GM12878 (cell line): ENCODE measurements at regions of chr2 and their contacts with region 1.

Region 1: DNA sequence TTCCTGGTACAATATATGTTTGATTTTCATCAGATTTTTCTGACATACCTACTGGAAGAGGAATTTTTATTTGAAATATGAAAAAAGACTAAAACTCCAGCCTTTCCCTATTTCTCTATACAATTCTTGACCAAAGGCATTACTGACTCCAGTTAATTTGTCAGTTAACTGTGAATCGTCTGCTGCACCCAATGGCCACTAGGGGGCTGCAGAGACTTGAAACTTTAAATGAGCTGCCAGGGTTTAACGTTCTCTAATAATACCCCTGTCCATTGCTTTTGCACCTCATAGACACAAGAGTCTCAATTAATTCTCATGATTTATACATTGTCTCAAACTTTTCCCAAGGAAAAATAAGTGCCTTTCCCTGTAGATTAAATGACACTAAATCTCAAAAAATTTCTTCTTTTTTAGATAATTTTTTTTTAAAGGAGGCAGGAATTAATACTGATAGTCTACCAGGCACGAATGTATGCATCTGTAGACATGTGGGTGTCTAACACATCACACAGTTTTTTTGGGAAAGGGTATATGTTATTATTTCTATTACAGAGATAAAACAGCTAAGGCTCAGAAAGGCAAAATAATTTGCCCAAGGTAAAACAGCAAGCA is 1.8 kb upstream of the ALK start:
- DNase-seq: no peak
- ATAC-seq: peak; percentile 83
- H3K4me3 ChIP-seq: no peak overlapping the region
- H3K27ac ChIP-seq: no peak overlapping the region
- H3K4me1 ChIP-seq: no peaks in the 10 kb centered on the region
- H3K27me3 ChIP-seq: peaks cover 6 to 13% of the 10 kb centered on the region in 2 experiments
- CTCF ChIP-seq: peak; percentile 84 to 90 (median 86)
- EP300 ChIP-seq: no peak
- POLR2A ChIP-seq: no peak
- RAD21 ChIP-seq: peak; percentile 80

Region 2: DNA sequence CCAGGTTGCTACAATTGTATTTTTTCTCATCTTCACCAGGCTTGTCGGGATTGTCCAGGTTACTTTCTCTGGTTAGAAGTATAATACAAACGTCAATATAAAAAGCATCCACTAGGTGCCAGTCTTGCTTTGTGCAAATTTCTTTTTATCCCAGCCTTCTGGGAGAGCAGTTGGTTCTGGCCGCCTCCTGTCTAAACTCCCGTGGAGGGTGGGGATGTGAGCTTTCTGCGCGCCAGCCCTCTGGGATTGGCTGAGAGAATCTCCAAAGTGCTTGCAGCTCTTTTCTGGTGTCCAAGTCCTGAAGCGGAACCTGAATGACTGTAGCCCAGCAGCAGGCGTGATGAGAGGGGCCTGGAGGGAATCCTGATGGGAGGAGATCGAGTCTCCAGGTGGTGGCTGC is 964.5 kb before region 1 on chr2:
- CTCF ChIA-PET with region 1: no interaction called
- POLR2A ChIA-PET with region 1: no interaction called
- RAD21 ChIA-PET with region 1: no interaction called
- SMC1A ChIA-PET with region 1: interaction called, 3 read pairs
- in situ Hi-C with region 1: no loop called
- intact Hi-C with region 1: loop called (anchors 5 kb)
- DNase-seq: peak; percentile 25
- ATAC-seq: peak; percentile 91
- H3K4me3 ChIP-seq: no peak overlapping the region
- H3K27ac ChIP-seq: no peak overlapping the region
- H3K4me1 ChIP-seq: no peaks in the 10 kb centered on the region
- H3K27me3 ChIP-seq: no peaks in the 10 kb centered on the region
- CTCF ChIP-seq: peak; percentile 47 to 74 (median 68); a peak in 5 of 6 replicates
- EP300 ChIP-seq: no peak
- POLR2A ChIP-seq: no peak
- RAD21 ChIP-seq: peak; percentile 95

Region 3: GRCh38 chr2:29766191-29766590 is 157.0 kb before region 1 on chr2:
- CTCF ChIA-PET with region 1: no interaction called
- POLR2A ChIA-PET with region 1: no interaction called
- RAD21 ChIA-PET with region 1: no interaction called
- SMC1A ChIA-PET with region 1: no interaction called
- in situ Hi-C with region 1: no loop called
- intact Hi-C with region 1: no loop called
- DNase-seq: no peak
- ATAC-seq: no peak
- H3K4me3 ChIP-seq: no peak overlapping the region
- H3K27ac ChIP-seq: no peak overlapping the region
- H3K4me1 ChIP-seq: no peaks in the 10 kb centered on the region
- H3K27me3 ChIP-seq: no peaks in the 10 kb centered on the region
- CTCF ChIP-seq: no peak
- EP300 ChIP-seq: no peak
- POLR2A ChIP-seq: no peak
- RAD21 ChIP-seq: no peak

Region 4: DNA sequence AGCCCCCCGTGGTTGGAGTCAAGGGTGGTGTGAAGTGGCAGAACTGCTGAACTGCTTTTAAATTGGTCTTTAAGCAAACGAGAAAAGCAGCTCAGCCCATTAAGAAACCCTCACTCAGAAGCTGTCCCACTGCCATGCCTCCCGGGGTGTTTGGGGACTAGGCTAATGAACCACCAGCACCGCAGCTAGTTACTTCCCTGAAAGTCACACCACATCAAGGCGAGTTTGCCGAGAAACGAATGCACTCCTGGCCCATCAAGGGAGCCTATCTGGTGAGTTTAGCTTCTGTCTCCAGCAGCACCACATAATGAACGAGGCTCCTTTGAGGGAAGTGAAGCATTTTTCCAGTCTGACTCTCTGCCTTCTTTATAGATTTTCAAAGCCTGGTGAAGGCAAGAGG is 12.8 kb after region 1 on chr2:
- CTCF ChIA-PET with region 1: interaction called, 17 read pairs
- POLR2A ChIA-PET with region 1: no interaction called
- RAD21 ChIA-PET with region 1: no interaction called
- SMC1A ChIA-PET with region 1: interaction called, 5 read pairs
- in situ Hi-C with region 1: no loop called
- intact Hi-C with region 1: no loop called
- DNase-seq: no peak
- ATAC-seq: no peak
- H3K4me3 ChIP-seq: no peak overlapping the region
- H3K27ac ChIP-seq: no peak overlapping the region
- H3K4me1 ChIP-seq: no peaks in the 10 kb centered on the region
- H3K27me3 ChIP-seq: peaks cover 0 to 2% of the 10 kb centered on the region in 2 experiments; a peak in 1 of 4 replicates
- CTCF ChIP-seq: no peak
- EP300 ChIP-seq: no peak
- POLR2A ChIP-seq: no peak
- RAD21 ChIP-seq: no peak

Region 5: GRCh38 chr2:29963972-29964570 is 40.9 kb after region 1 on chr2:
- CTCF ChIA-PET with region 1: no interaction called
- POLR2A ChIA-PET with region 1: no interaction called
- RAD21 ChIA-PET with region 1: no interaction called
- SMC1A ChIA-PET with region 1: no interaction called
- in situ Hi-C with region 1: no loop called
- intact Hi-C with region 1: no loop called
- DNase-seq: no peak
- ATAC-seq: no peak
- H3K4me3 ChIP-seq: no peak overlapping the region
- H3K27ac ChIP-seq: no peak overlapping the region
- H3K4me1 ChIP-seq: no peaks in the 10 kb centered on the region
- H3K27me3 ChIP-seq: peaks cover 2 to 5% of the 10 kb centered on the region in 2 experiments; a peak in 3 of 4 replicates
- CTCF ChIP-seq: no peak
- EP300 ChIP-seq: no peak
- POLR2A ChIP-seq: no peak
- RAD21 ChIP-seq: no peak

Region 6: GRCh38 chr2:30026087-30027055 is 103.2 kb after region 1 on chr2:
- CTCF ChIA-PET with region 1: interaction called, 4 read pairs
- POLR2A ChIA-PET with region 1: no interaction called
- RAD21 ChIA-PET with region 1: interaction called, 6 read pairs
- SMC1A ChIA-PET with region 1: interaction called, 12 read pairs
- in situ Hi-C with region 1: no loop called
- intact Hi-C with region 1: loop called (anchors 1 kb)
- DNase-seq: no peak
- ATAC-seq: peak; percentile 70
- H3K4me3 ChIP-seq: no peak overlapping the region
- H3K27ac ChIP-seq: no peak overlapping the region
- H3K4me1 ChIP-seq: peaks cover 10% of the 10 kb centered on the region
- H3K27me3 ChIP-seq: no peaks in the 10 kb centered on the region
- CTCF ChIP-seq: peak; percentile 46 to 56 (median 56); a peak in 4 of 6 replicates
- EP300 ChIP-seq: no peak
- POLR2A ChIP-seq: no peak
- RAD21 ChIP-seq: peak; percentile 53

Region 7: GRCh38 chr2:30072250-30072842 is 149.1 kb after region 1 on chr2:
- CTCF ChIA-PET with region 1: interaction called, 58 read pairs
- POLR2A ChIA-PET with region 1: no interaction called
- RAD21 ChIA-PET with region 1: interaction called, 26 read pairs
- SMC1A ChIA-PET with region 1: interaction called, 24 read pairs
- in situ Hi-C with region 1: loop called (anchors 5 kb)
- intact Hi-C with region 1: loop called (anchors 1 kb)
- DNase-seq: peak; percentile 16
- ATAC-seq: peak; percentile 99
- H3K4me3 ChIP-seq: no peak overlapping the region
- H3K27ac ChIP-seq: no peak overlapping the region
- H3K4me1 ChIP-seq: no peaks in the 10 kb centered on the region
- H3K27me3 ChIP-seq: peaks cover 1 to 4% of the 10 kb centered on the region in 2 experiments; a peak in 3 of 4 replicates
- CTCF ChIP-seq: peak; percentile 75 to 83 (median 80)
- EP300 ChIP-seq: no peak
- POLR2A ChIP-seq: no peak
- RAD21 ChIP-seq: peak; percentile 80

Region 8: GRCh38 chr2:30115141-30115980 is 192.1 kb after region 1 on chr2:
- CTCF ChIA-PET with region 1: interaction called, 8 read pairs
- POLR2A ChIA-PET with region 1: no interaction called
- RAD21 ChIA-PET with region 1: interaction called, 6 read pairs
- SMC1A ChIA-PET with region 1: interaction called, 3 read pairs
- in situ Hi-C with region 1: no loop called
- intact Hi-C with region 1: loop called (anchors 5 kb)
- DNase-seq: peak; percentile 20
- ATAC-seq: peak; percentile 89
- H3K4me3 ChIP-seq: no peak overlapping the region
- H3K27ac ChIP-seq: no peak overlapping the region
- H3K4me1 ChIP-seq: no peaks in the 10 kb centered on the region
- H3K27me3 ChIP-seq: no peaks in the 10 kb centered on the region; a peak in 2 of 4 replicates
- CTCF ChIP-seq: peak; percentile 87 to 95 (median 92)
- EP300 ChIP-seq: no peak
- POLR2A ChIP-seq: no peak
- RAD21 ChIP-seq: peak; percentile 79